ENCODE measurements at regions of chr13 and their contacts with region 1.

Region 1: DNA sequence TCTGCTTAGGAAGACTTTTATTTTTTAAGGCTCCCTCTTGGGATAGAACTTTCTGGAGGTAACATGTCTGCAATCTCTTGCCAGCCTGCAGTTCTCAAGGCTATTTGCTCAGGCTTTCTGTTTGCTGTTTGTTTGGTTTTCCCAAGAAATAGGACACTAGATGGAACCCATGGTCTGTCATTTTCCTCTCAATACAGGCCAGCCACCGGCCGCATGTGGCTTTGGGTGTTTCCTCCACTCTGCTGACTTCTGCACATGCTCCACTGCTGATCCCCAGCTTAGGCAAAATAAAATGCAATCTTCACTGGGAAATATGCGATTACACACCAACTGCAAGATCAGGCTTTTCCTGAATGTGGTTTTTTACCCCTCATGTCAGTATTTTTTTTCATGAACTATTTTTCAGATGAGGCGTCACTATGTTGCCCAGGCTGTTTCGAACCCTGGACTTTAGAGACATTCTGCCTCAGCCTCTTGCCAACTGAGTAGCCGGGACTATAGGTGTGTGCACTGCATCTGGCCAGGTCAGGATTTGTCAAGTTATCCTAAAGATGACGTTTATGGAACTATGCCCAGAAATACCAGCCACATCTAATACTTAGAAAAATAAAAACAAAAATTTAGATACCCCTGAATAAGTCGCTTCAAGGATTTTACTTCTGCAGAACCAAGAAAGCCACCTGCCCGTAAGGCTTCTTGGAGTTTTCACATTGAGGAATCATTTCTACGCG is 94.3 kb upstream of the PABPC3 start:
- DNase-seq: no peak
- ATAC-seq: no peak
- H3K4me3 Mint-ChIP-seq: no peak overlapping the region
- H3K27ac Mint-ChIP-seq: no peak overlapping the region
- H3K4me1 Mint-ChIP-seq: peaks cover 2% of the 10 kb centered on the region
- H3K27me3 Mint-ChIP-seq: peaks cover 39% of the 10 kb centered on the region
- CTCF ChIP-seq: no peak

Region 2: DNA sequence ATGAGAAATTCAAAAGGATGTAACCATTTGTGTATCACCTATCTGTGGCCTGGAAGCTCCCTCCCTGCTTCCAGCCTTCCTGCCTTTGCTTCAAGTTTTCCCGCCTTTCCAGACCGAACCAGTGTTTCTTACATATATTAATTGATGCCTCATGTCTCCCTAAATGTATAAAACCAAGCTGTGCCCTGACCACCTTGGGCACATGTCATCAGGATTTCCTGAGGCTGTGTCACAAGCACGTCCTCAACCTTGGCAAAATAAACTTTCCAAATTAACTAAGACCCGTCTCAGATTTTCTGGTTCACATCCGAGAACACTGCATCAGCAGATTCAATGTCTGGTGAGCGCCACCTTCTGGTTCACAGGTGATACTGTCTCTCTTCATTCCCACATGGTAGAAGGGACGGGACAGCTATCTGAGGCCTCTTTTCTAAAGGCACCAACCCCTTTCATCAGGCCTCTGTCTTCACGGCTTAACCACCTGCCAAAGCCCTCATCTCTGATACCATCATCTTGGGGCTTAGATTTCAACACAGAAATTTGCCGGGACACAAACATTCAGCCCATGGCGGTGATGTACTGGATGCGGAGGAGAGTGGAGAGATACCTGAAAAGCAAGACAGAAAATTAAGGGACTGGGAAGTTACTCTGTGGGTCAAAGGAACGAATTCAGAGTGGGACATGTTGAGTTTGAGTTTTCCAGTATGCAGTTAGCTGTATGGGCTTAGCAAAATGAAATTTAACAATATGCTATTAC is 35.6 kb after region 1 on chr13:
- CTCF ChIA-PET with region 1: interaction called, 26 read pairs
- POLR2A ChIA-PET with region 1: no interaction called
- intact Hi-C with region 1: loop called (anchors 1 kb)
- DNase-seq: no peak
- ATAC-seq: peak; percentile 82
- H3K4me3 Mint-ChIP-seq: no peak overlapping the region
- H3K27ac Mint-ChIP-seq: no peak overlapping the region
- H3K4me1 Mint-ChIP-seq: peaks cover 3% of the 10 kb centered on the region
- H3K27me3 Mint-ChIP-seq: peaks cover 46% of the 10 kb centered on the region
- CTCF ChIP-seq: peak; percentile 24

Region 3: GRCh38 chr13:25085125-25085742 is 83.6 kb after region 1 on chr13:
- CTCF ChIA-PET with region 1: no interaction called
- POLR2A ChIA-PET with region 1: no interaction called
- intact Hi-C with region 1: no loop called
- DNase-seq: no peak
- ATAC-seq: no peak
- H3K4me3 Mint-ChIP-seq: no peak overlapping the region
- H3K27ac Mint-ChIP-seq: no peak overlapping the region
- H3K4me1 Mint-ChIP-seq: peaks cover 3% of the 10 kb centered on the region
- H3K27me3 Mint-ChIP-seq: peaks cover 6% of the 10 kb centered on the region
- CTCF ChIP-seq: no peak

Region 4: GRCh38 chr13:25114220-25114619 is 112.6 kb after region 1 on chr13:
- CTCF ChIA-PET with region 1: interaction called, 4 read pairs
- POLR2A ChIA-PET with region 1: no interaction called
- intact Hi-C with region 1: loop called (anchors 1 kb)
- DNase-seq: peak; percentile 31
- ATAC-seq: peak; percentile 67
- H3K4me3 Mint-ChIP-seq: no peak overlapping the region
- H3K27ac Mint-ChIP-seq: no peak overlapping the region
- H3K4me1 Mint-ChIP-seq: peaks cover 4% of the 10 kb centered on the region
- H3K27me3 Mint-ChIP-seq: peaks cover 26% of the 10 kb centered on the region
- CTCF ChIP-seq: no peak

Region 5: DNA sequence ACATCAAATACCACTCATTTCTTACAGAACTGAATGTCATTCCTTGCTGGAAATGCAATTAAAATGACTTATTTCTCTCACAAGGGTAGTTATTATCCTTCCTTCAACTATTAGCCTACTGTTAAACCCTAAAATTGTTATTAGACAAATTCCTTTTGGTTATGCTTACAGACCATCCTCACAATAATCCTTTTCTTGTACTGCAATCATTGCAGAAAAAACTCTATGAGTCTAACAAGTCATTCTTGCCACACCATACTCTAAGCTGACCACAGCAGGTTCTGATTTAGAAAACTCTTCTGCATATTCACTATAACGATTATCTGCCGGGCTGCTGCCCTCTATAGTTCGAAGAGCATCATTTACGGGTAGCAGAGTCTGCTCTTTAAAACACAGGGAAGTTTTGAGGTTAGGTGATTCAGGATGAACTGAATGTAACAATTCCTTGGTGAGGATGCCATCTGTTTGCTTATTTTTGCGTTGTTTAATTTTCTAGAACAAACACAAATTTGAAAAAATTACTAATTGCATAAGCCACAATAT is 247.4 kb after region 1 on chr13:
- CTCF ChIA-PET with region 1: no interaction called
- POLR2A ChIA-PET with region 1: no interaction called
- intact Hi-C with region 1: loop called (anchors 5 kb)
- DNase-seq: no peak
- ATAC-seq: no peak
- H3K4me3 Mint-ChIP-seq: no peak overlapping the region
- H3K27ac Mint-ChIP-seq: no peak overlapping the region
- H3K4me1 Mint-ChIP-seq: peaks cover 25% of the 10 kb centered on the region
- H3K27me3 Mint-ChIP-seq: no peaks in the 10 kb centered on the region
- CTCF ChIP-seq: no peak

Region 6: GRCh38 chr13:25963674-25964073 is 962.0 kb after region 1 on chr13:
- CTCF ChIA-PET with region 1: no interaction called
- POLR2A ChIA-PET with region 1: no interaction called
- intact Hi-C with region 1: no loop called
- DNase-seq: no peak
- ATAC-seq: no peak
- H3K4me3 Mint-ChIP-seq: no peak overlapping the region
- H3K27ac Mint-ChIP-seq: no peak overlapping the region
- H3K4me1 Mint-ChIP-seq: no peaks in the 10 kb centered on the region
- H3K27me3 Mint-ChIP-seq: peaks cover 2% of the 10 kb centered on the region
- CTCF ChIP-seq: no peak

Region 7: GRCh38 chr13:26698392-26699196 is 1697.0 kb after region 1 on chr13:
- CTCF ChIA-PET with region 1: no interaction called
- POLR2A ChIA-PET with region 1: no interaction called
- intact Hi-C with region 1: loop called (anchors 10 kb)
- DNase-seq: peak; percentile 72
- ATAC-seq: peak; percentile 87
- H3K4me3 Mint-ChIP-seq: no peak overlapping the region
- H3K27ac Mint-ChIP-seq: no peak overlapping the region
- H3K4me1 Mint-ChIP-seq: peaks cover 4% of the 10 kb centered on the region
- H3K27me3 Mint-ChIP-seq: peaks cover 7% of the 10 kb centered on the region
- CTCF ChIP-seq: peak; percentile 30

Measured in activated B cell treated with CpG ODN at 0.5 μM for 24 hours (primary cell).